Naive thymus-derived CD4-positive, alpha-beta T cell (primary cell): ENCODE measurements at regions of chr9 and their contacts with region 1.

Region 1: DNA sequence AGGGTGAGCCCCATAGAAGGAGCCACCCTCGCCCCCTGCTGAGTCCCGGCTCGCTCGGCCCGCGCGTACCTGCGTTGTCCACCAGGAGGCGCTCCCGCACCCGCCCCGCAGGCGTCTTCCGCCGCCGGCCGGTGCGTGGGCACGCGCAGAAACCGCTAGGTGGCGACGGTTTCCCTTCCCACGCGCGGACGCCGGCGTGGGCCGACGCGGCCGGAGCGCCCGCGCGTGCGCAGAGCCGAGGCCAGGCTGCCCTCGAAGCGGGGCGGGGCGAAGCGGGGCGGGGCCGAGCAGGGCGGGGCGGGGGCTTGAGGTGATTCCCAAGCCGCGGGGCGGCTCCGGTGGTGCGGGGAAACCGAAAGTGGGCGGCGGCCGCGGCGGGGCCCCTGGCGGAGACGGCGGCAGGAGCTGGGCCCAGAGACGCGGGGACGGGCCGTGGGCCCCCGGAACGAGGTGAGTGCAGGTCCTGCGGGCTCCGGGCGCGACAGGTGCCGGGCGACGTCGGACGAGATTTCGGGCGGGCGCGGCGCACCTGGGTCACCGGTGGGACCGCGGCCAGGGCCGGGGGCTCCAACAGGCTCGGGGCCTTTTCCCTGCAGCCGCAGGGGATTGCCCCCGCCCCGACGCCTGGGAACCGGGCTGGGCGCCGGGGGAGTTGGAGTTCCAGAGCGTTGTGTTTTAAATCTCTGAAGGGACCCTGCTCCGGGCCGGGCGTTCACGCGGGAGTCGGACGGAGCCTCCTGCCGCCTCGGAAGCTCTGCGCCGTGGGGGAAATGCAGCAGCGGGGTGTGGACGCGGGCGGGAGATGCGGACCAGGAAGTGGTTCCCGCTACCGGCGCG is at the start of gene TDRD7:
- DNase-seq: peak; percentile 82 to 96 (median 90)
- ATAC-seq: peak; percentile 96
- H3K4me3 ChIP-seq: peak within 1 kb of the TSS; percentile 49
- H3K4me3 Mint-ChIP-seq: peak within 1 kb of the TSS; percentile 73 to 95 (median 86)
- H3K27ac ChIP-seq: peak within 1 kb of the TSS; percentile 85
- H3K27ac Mint-ChIP-seq: peak within 1 kb of the TSS; percentile 61 to 93 (median 86)
- H3K4me1 ChIP-seq: peaks cover 8 to 13% of the 10 kb centered on the region in 2 donors
- H3K4me1 Mint-ChIP-seq: peaks cover 12 to 39% (median 34%) of the 10 kb centered on the region in 7 donors
- H3K27me3 ChIP-seq: no peaks in the 10 kb centered on the region
- H3K27me3 Mint-ChIP-seq: peaks cover 16 to 34% (median 16%) of the 10 kb centered on the region in 5 donors
- total RNA-seq, gene TDRD7: 7.8 to 15.0 (median 10.8) TPM

Region 2: GRCh38 chr9:96449845-96450612 is 962.0 kb before region 1 on chr9 and contains the start of gene HABP4:
- CTCF ChIA-PET with region 1: no interaction called
- POLR2A ChIA-PET with region 1: no interaction called
- intact Hi-C with region 1: loop called in 1 of 2 experiments (anchors 10 kb)
- DNase-seq: peak; percentile 90 to 97 (median 95)
- ATAC-seq: peak; percentile 98
- H3K4me3 ChIP-seq: peak within 1 kb of the TSS; percentile 77
- H3K4me3 Mint-ChIP-seq: peak within 1 kb of the TSS; percentile 88 to 99 (median 93)
- H3K27ac ChIP-seq: peak within 1 kb of the TSS; percentile 74
- H3K27ac Mint-ChIP-seq: peak within 1 kb of the TSS; percentile 74 to 98 (median 94)
- H3K4me1 ChIP-seq: peaks cover 5 to 14% of the 10 kb centered on the region in 2 donors
- H3K4me1 Mint-ChIP-seq: peaks cover 19 to 33% (median 26%) of the 10 kb centered on the region in 7 donors
- H3K27me3 ChIP-seq: no peaks in the 10 kb centered on the region
- H3K27me3 Mint-ChIP-seq: peaks cover 0 to 41% (median 6%) of the 10 kb centered on the region in 5 donors
- total RNA-seq, gene HABP4: 6.6 to 40.3 (median 23.9) TPM

Region 3: GRCh38 chr9:97237951-97238851 is 173.8 kb before region 1 on chr9:
- CTCF ChIA-PET with region 1: no interaction called
- POLR2A ChIA-PET with region 1: interaction called, 3 read pairs
- intact Hi-C with region 1: loop called in 1 of 2 experiments (anchors 2 kb)
- DNase-seq: peak; percentile 48 to 82 (median 70)
- ATAC-seq: peak; percentile 94
- H3K4me3 ChIP-seq: peak overlapping the region; percentile 71
- H3K4me3 Mint-ChIP-seq: peak overlapping the region; percentile 87 to 98 (median 95)
- H3K27ac ChIP-seq: peak overlapping the region; percentile 63
- H3K27ac Mint-ChIP-seq: peak overlapping the region; percentile 84 to 94 (median 90)
- H3K4me1 ChIP-seq: peaks cover 0 to 5% of the 10 kb centered on the region in 2 donors
- H3K4me1 Mint-ChIP-seq: peaks cover 11 to 38% (median 24%) of the 10 kb centered on the region in 7 donors
- H3K27me3 ChIP-seq: no peaks in the 10 kb centered on the region
- H3K27me3 Mint-ChIP-seq: peaks cover 0 to 5% (median 0%) of the 10 kb centered on the region in 5 donors

Region 4: GRCh38 chr9:97501177-97501971 is 89.4 kb after region 1 on chr9 and contains the start of gene TMOD1:
- CTCF ChIA-PET with region 1: no interaction called
- POLR2A ChIA-PET with region 1: no interaction called
- intact Hi-C with region 1: loop called (anchors 2 to 5 kb)
- DNase-seq: peak in 3 of 9 donors; percentile 7 to 67 (median 25)
- ATAC-seq: peak; percentile 80
- H3K4me3 ChIP-seq: peak within 1 kb of the TSS; percentile 24
- H3K4me3 Mint-ChIP-seq: peak within 1 kb of the TSS; percentile 73 to 85 (median 78)
- H3K27ac ChIP-seq: no peak within 1 kb of the TSS
- H3K27ac Mint-ChIP-seq: no peak within 1 kb of the TSS
- H3K4me1 ChIP-seq: peaks cover 0 to 9% of the 10 kb centered on the region in 2 donors
- H3K4me1 Mint-ChIP-seq: peaks cover 6 to 26% (median 16%) of the 10 kb centered on the region in 7 donors
- H3K27me3 ChIP-seq: peaks cover 4 to 5% of the 10 kb centered on the region in 2 donors
- H3K27me3 Mint-ChIP-seq: peaks cover 44 to 56% (median 47%) of the 10 kb centered on the region in 5 donors
- total RNA-seq, gene TMOD1: 0.68 to 1.4 (median 1.1) TPM

Region 5: GRCh38 chr9:97564291-97565175 is 152.5 kb after region 1 on chr9:
- CTCF ChIA-PET with region 1: no interaction called
- POLR2A ChIA-PET with region 1: no interaction called
- intact Hi-C with region 1: no loop called
- DNase-seq: no peak
- ATAC-seq: no peak
- H3K4me3 ChIP-seq: no peak overlapping the region
- H3K4me3 Mint-ChIP-seq: no peak overlapping the region
- H3K27ac ChIP-seq: no peak overlapping the region
- H3K27ac Mint-ChIP-seq: no peak overlapping the region
- H3K4me1 ChIP-seq: no peaks in the 10 kb centered on the region
- H3K4me1 Mint-ChIP-seq: peaks cover 0 to 3% (median 0%) of the 10 kb centered on the region in 7 donors
- H3K27me3 ChIP-seq: no peaks in the 10 kb centered on the region
- H3K27me3 Mint-ChIP-seq: peaks cover 4 to 13% (median 7%) of the 10 kb centered on the region in 5 donors

Region 6: GRCh38 chr9:97598461-97599288 is 186.7 kb after region 1 on chr9:
- CTCF ChIA-PET with region 1: interaction called, 13 read pairs
- POLR2A ChIA-PET with region 1: no interaction called
- intact Hi-C with region 1: loop called (anchors 1 kb)
- DNase-seq: peak; percentile 26 to 73 (median 67)
- ATAC-seq: peak; percentile 93
- H3K4me3 ChIP-seq: no peak overlapping the region
- H3K4me3 Mint-ChIP-seq: peak overlapping the region in 9 of 10 donors; percentile 19 to 73 (median 60)
- H3K27ac ChIP-seq: no peak overlapping the region
- H3K27ac Mint-ChIP-seq: peak overlapping the region in 4 of 9 donors; percentile 4 to 49 (median 20)
- H3K4me1 ChIP-seq: peaks cover 4% of the 10 kb centered on the region in 2 donors
- H3K4me1 Mint-ChIP-seq: peaks cover 6 to 8% (median 6%) of the 10 kb centered on the region in 7 donors
- H3K27me3 ChIP-seq: no peaks in the 10 kb centered on the region
- H3K27me3 Mint-ChIP-seq: peaks cover 0 to 2% (median 0%) of the 10 kb centered on the region in 5 donors